ENCODE measurements at regions of chr1 and their contacts with region 1.

Region 1: GRCh38 chr1:45011837-45012638 is at the start of gene UROD:
- DNase-seq: peak; percentile 96
- H3K4me3 Mint-ChIP-seq: peak within 1 kb of the TSS; percentile 88
- H3K27ac Mint-ChIP-seq: peak within 1 kb of the TSS; percentile 85
- H3K4me1 Mint-ChIP-seq: peaks cover 20% of the 10 kb centered on the region
- H3K27me3 Mint-ChIP-seq: no peaks in the 10 kb centered on the region
- CTCF ChIP-seq: no peak
- total RNA-seq, gene UROD: 76.9 and 84.7 TPM in 2 replicates

Region 2: GRCh38 chr1:44730741-44731512 is 281.1 kb before region 1 on chr1 and contains the start of gene RNU5D-1:
- CTCF ChIA-PET with region 1: interaction called, 13 read pairs
- POLR2A ChIA-PET with region 1: interaction called, 43 read pairs
- intact Hi-C with region 1: loop called (anchors 5 kb)
- DNase-seq: peak; percentile 97
- H3K4me3 Mint-ChIP-seq: peak within 1 kb of the TSS; percentile 51
- H3K27ac Mint-ChIP-seq: peak within 1 kb of the TSS; percentile 100
- H3K4me1 Mint-ChIP-seq: peaks cover 26% of the 10 kb centered on the region
- H3K27me3 Mint-ChIP-seq: no peaks in the 10 kb centered on the region
- CTCF ChIP-seq: peak; percentile 77
- total RNA-seq, gene RNU5D-1: not detected in 2 replicates

Region 3: GRCh38 chr1:44799770-44800584 is 212.1 kb before region 1 on chr1 and contains the start of gene PLK3:
- CTCF ChIA-PET with region 1: interaction called, 5 read pairs
- POLR2A ChIA-PET with region 1: interaction called, 46 read pairs
- intact Hi-C with region 1: no loop called
- DNase-seq: peak; percentile 97
- H3K4me3 Mint-ChIP-seq: peak within 1 kb of the TSS; percentile 86
- H3K27ac Mint-ChIP-seq: peak within 1 kb of the TSS; percentile 100
- H3K4me1 Mint-ChIP-seq: peaks cover 23% of the 10 kb centered on the region
- H3K27me3 Mint-ChIP-seq: no peaks in the 10 kb centered on the region
- CTCF ChIP-seq: peak; percentile 85
- total RNA-seq, gene PLK3: 47.2 and 68.0 TPM in 2 replicates

Region 4: DNA sequence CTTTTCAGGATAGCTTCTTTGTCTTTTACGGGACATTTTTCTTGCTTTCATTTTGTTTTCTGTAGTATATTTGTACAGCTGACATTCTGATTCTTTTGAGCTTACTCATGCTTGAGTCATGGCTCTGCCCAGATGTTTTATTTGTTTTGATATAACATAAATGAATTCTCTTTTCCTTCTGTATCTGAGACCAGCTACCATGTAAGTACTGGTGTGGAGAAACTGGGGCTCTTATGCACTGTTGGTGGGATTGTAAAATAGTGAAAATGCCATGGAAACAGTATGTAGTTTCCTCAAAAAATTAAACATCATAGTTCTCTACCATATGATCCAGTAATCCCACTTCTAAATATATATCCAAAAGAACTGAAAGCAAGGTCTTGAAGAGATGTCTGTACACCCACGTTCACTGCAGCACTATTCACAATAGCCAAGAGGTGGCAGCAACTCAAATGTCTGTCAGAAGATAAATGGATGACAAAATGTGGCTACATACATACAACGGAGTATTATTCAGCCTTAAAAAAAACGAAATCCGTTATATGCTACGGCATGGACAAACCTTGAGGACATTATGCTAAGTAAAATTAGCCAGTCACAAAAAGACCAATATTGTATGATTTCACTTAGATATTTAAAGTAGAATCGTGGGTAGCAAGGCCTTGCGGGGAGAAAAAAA is 87.1 kb before region 1 on chr1:
- CTCF ChIA-PET with region 1: no interaction called
- POLR2A ChIA-PET with region 1: interaction called, 18 read pairs
- intact Hi-C with region 1: loop called (anchors 2 kb)
- DNase-seq: peak; percentile 70
- H3K4me3 Mint-ChIP-seq: peak overlapping the region; percentile 73
- H3K27ac Mint-ChIP-seq: peak overlapping the region; percentile 91
- H3K4me1 Mint-ChIP-seq: peaks cover 13% of the 10 kb centered on the region
- H3K27me3 Mint-ChIP-seq: no peaks in the 10 kb centered on the region
- CTCF ChIP-seq: peak; percentile 27

Region 5: DNA sequence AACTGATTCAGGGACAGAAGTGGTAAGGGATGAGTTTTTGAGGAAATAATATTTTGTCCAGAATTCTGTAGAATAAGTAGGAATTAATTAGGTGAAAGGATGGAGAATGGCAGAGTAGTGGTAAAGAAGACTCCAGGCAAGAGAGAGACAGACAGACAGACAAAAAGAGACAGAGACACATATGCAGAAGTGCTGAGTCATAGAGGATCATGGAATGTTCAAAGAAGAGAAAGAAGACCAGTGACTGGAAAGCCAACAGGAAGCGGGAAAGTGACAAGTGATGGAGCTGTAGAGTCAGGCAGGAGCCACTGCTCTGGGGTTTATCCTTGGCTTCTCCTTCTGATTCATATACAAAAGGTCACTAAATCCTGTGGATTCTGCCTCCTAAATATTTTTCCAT is 85.9 kb after region 1 on chr1:
- CTCF ChIA-PET with region 1: no interaction called
- POLR2A ChIA-PET with region 1: no interaction called
- intact Hi-C with region 1: no loop called
- DNase-seq: peak; percentile 18
- H3K4me3 Mint-ChIP-seq: no peak overlapping the region
- H3K27ac Mint-ChIP-seq: no peak overlapping the region
- H3K4me1 Mint-ChIP-seq: no peaks in the 10 kb centered on the region
- H3K27me3 Mint-ChIP-seq: peaks cover 37% of the 10 kb centered on the region
- CTCF ChIP-seq: no peak

Region 6: DNA sequence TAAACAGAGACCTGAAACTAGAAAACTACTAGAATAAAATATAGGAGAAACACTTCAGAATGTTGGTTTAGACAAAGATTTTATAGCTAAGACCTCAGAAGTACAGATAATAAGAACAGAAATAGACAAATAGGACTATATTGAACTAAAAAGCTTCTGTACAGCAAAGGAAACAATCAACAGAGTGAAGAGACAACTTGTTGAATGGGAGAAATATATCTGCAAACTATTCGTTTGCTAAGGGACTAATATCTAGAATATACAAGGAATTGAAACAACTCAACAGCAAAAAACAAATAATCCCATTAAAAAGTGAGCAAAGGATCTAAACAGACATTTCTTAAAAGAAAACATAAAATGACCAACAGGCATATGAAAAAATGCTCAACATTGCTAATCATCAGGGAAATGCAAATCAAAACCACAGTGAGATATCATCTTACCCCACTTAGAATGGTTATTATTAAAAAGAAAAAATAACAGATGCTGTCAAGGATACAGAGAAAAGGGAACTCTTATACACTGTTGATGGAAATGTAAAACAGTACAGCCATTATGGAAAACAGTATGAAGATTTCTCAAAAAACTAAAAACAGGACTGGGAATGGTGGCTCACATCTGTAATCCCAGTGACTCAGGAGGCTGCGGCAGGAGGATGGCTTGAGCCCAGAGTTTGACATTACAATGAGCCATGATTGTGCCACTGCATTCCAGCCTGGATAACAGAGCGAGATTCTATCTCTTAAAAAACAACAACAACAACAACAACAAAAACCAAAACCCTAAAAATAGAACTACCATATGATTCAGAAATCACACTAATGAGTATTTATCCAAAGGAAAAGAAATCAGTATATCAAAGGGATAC is 231.7 kb after region 1 on chr1:
- CTCF ChIA-PET with region 1: no interaction called
- POLR2A ChIA-PET with region 1: no interaction called
- intact Hi-C with region 1: no loop called
- DNase-seq: no peak
- H3K4me3 Mint-ChIP-seq: no peak overlapping the region
- H3K27ac Mint-ChIP-seq: no peak overlapping the region
- H3K4me1 Mint-ChIP-seq: peaks cover 7% of the 10 kb centered on the region
- H3K27me3 Mint-ChIP-seq: no peaks in the 10 kb centered on the region
- CTCF ChIP-seq: no peak

Region 7: GRCh38 chr1:45303582-45304310 is 291.7 kb after region 1 on chr1:
- CTCF ChIA-PET with region 1: interaction called, 437 read pairs
- POLR2A ChIA-PET with region 1: interaction called, 176 read pairs
- intact Hi-C with region 1: loop called (anchors 1 kb)
- DNase-seq: peak; percentile 97
- H3K4me3 Mint-ChIP-seq: peak overlapping the region; percentile 86
- H3K27ac Mint-ChIP-seq: peak overlapping the region; percentile 96
- H3K4me1 Mint-ChIP-seq: peaks cover 5% of the 10 kb centered on the region
- H3K27me3 Mint-ChIP-seq: no peaks in the 10 kb centered on the region
- CTCF ChIP-seq: peak; percentile 67

Region 8: GRCh38 chr1:45359882-45360513 is 348.0 kb after region 1 on chr1:
- CTCF ChIA-PET with region 1: interaction called, 4 read pairs
- POLR2A ChIA-PET with region 1: interaction called, 3 read pairs
- intact Hi-C with region 1: loop called (anchors 5 kb)
- DNase-seq: peak; percentile 70
- H3K4me3 Mint-ChIP-seq: no peak overlapping the region
- H3K27ac Mint-ChIP-seq: no peak overlapping the region
- H3K4me1 Mint-ChIP-seq: peaks cover 15% of the 10 kb centered on the region
- H3K27me3 Mint-ChIP-seq: no peaks in the 10 kb centered on the region
- CTCF ChIP-seq: peak; percentile 64

Region 9: DNA sequence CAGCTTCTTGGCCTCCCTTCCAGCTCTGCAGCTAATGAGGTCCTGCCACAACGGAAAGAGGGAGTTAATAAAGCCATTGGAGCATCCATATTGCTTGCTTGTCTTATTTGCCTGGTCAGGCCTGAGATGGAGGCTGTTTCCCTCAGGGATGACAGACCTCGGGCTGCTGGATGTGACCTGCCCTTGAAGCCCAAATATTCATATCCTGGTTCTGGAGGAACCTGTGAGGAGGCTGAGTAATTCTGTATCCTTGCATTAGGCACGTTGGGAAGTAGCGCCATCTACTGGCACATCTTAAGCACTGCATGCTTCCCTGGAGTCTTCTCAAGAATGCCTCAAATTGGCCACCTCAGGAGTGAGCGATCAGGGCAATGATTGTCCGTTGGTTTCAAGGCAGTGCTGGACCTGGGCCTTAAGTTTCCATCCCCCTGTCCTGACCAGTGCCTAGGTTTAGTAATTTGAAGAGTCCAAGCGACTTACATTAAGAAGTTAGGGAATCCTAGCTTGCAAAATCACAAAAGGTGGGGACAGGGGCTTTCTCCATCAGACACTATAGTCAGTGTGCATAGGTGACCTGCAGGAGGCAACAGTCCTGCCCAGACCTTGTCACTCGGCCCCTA is 558.0 kb after region 1 on chr1:
- CTCF ChIA-PET with region 1: interaction called, 3 read pairs
- POLR2A ChIA-PET with region 1: no interaction called
- intact Hi-C with region 1: loop called (anchors 5 kb)
- DNase-seq: peak; percentile 77
- H3K4me3 Mint-ChIP-seq: no peak overlapping the region
- H3K27ac Mint-ChIP-seq: no peak overlapping the region
- H3K4me1 Mint-ChIP-seq: no peaks in the 10 kb centered on the region
- H3K27me3 Mint-ChIP-seq: no peaks in the 10 kb centered on the region
- CTCF ChIP-seq: peak; percentile 97

Measured in MCF 10A (cell line).